ENCODE measurements at regions of chr22 and their contacts with region 1.

Region 1: DNA sequence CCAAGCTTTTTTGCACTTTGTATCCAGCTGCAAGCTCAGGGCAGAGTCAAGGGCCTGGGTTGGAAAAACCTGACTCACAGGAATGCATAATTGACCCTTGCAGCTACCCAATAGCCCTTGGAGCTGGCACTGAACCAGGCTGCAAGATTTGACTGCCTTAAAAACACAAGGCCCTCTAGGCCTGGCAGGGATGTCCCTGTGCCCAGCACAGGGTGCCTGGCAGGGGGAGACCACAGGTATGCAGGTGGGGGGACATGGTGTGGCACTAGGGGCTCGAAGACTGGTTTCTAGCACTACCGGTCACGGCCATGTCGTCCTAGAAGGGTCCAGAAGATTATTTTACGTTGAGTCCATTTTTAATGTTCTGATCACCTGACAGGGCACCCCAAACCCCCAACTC is 30.2 kb downstream of the SBF1 start:
- DNase-seq: no peak
- H3K4me3 ChIP-seq: no peak overlapping the region
- H3K27ac ChIP-seq: peak overlapping the region in 1 of 2 donors; percentile 34
- H3K4me1 ChIP-seq: peaks cover 0 to 17% (median 5%) of the 10 kb centered on the region in 4 donors
- H3K27me3 ChIP-seq: no peaks in the 10 kb centered on the region
- CTCF ChIP-seq: no peak

Region 2: GRCh38 chr22:50250555-50251476 is 193.8 kb before region 1 on chr22 and contains the start of gene HDAC10:
- intact Hi-C with region 1: loop called (anchors 10 kb)
- DNase-seq: peak; percentile 67 to 85
- H3K4me3 ChIP-seq: peak within 1 kb of the TSS; percentile 66 to 70
- H3K27ac ChIP-seq: peak within 1 kb of the TSS; percentile 70 to 76
- H3K4me1 ChIP-seq: peaks cover 0 to 46% (median 31%) of the 10 kb centered on the region in 4 donors
- H3K27me3 ChIP-seq: peaks cover 0 to 4% of the 10 kb centered on the region in 2 donors
- CTCF ChIP-seq: no peak

Region 3: GRCh38 chr22:50469377-50470305 is 25.0 kb after region 1 on chr22:
- intact Hi-C with region 1: no loop called
- DNase-seq: no peak
- H3K4me3 ChIP-seq: no peak overlapping the region
- H3K27ac ChIP-seq: no peak overlapping the region
- H3K4me1 ChIP-seq: peaks cover 5 to 61% (median 44%) of the 10 kb centered on the region in 4 donors
- H3K27me3 ChIP-seq: no peaks in the 10 kb centered on the region
- CTCF ChIP-seq: no peak

Measured in tibial artery (tissue), 4 donors.